ENCODE measurements at regions of chr12 and their contacts with region 1.

Region 1: GRCh38 chr12:92987362-92987761 is 58.3 kb upstream of the EEA1 start:
- DNase-seq: peak in 1 of 2 experiments; percentile 75
- H3K4me3 ChIP-seq: no peak overlapping the region
- H3K4me3 Mint-ChIP-seq: peak overlapping the region; percentile 27
- H3K27ac Mint-ChIP-seq: peak overlapping the region; percentile 87
- H3K4me1 ChIP-seq: peaks cover 30% of the 10 kb centered on the region
- H3K4me1 Mint-ChIP-seq: peaks cover 33% of the 10 kb centered on the region
- H3K27me3 ChIP-seq: no peaks in the 10 kb centered on the region
- H3K27me3 Mint-ChIP-seq: no peaks in the 10 kb centered on the region
- CTCF ChIP-seq: peak; percentile 50 to 79

Region 2: GRCh38 chr12:92259852-92260251 is 727.5 kb before region 1 on chr12:
- CTCF ChIA-PET with region 1: no interaction called
- POLR2A ChIA-PET with region 1: no interaction called
- intact Hi-C with region 1: no loop called
- DNase-seq: no peak
- H3K4me3 ChIP-seq: no peak overlapping the region
- H3K4me3 Mint-ChIP-seq: no peak overlapping the region
- H3K27ac Mint-ChIP-seq: no peak overlapping the region
- H3K4me1 ChIP-seq: no peaks in the 10 kb centered on the region
- H3K4me1 Mint-ChIP-seq: peaks cover 5% of the 10 kb centered on the region
- H3K27me3 ChIP-seq: no peaks in the 10 kb centered on the region
- H3K27me3 Mint-ChIP-seq: peaks cover 7% of the 10 kb centered on the region
- CTCF ChIP-seq: no peak

Region 3: DNA sequence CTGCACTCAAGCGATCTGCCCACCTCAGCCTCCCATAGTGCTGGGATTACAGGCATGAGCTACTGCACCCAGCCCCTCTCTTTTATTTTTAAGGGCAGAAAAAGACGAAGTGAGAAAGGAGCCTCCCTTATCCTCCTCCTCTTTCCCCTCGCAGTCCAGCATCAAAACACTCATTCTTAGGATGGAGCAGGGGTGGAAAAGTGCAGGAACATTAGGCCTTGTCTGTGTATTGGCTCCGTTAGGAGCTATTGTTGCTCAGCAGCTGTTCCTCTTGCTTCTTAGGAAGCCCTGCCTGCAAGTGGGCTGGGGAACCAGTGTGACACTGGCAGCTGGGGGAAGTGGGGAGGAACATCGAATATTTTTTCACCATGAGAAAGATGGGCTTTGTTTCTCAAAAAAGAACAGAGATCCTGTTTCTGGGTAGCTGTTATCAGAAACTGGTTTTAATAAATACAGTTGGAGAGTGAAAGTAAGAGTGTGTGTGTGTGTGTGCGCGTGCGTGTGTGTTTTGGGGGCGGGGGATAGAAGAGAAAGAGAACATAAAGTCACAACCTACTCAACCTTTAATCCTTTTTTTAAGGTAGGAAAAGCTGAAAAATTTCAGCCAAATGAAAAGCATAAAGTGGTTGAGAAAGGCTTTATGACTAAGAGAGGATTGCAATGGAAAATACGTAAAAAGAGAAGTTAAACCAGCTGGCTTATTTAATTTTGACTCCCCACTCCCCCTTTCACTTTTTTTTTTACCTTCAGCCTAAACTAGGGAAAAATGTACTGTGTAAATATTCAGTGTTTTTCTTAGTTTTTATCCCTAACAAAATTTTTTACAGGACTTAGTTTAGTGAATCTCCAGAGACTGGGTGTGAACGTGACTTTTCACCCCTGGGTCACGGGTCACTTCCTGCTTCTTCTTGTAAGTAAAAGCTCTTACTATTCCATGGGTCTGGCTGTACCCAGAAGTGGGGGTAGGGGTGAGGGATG is 481.8 kb before region 1 on chr12:
- CTCF ChIA-PET with region 1: no interaction called
- POLR2A ChIA-PET with region 1: no interaction called
- intact Hi-C with region 1: no loop called
- DNase-seq: no peak
- H3K4me3 ChIP-seq: no peak overlapping the region
- H3K4me3 Mint-ChIP-seq: no peak overlapping the region
- H3K27ac Mint-ChIP-seq: no peak overlapping the region
- H3K4me1 ChIP-seq: no peaks in the 10 kb centered on the region
- H3K4me1 Mint-ChIP-seq: peaks cover 8% of the 10 kb centered on the region
- H3K27me3 ChIP-seq: no peaks in the 10 kb centered on the region; the same call in 1 of the 2 replicates
- H3K27me3 Mint-ChIP-seq: no peaks in the 10 kb centered on the region
- CTCF ChIP-seq: no peak

Region 4: DNA sequence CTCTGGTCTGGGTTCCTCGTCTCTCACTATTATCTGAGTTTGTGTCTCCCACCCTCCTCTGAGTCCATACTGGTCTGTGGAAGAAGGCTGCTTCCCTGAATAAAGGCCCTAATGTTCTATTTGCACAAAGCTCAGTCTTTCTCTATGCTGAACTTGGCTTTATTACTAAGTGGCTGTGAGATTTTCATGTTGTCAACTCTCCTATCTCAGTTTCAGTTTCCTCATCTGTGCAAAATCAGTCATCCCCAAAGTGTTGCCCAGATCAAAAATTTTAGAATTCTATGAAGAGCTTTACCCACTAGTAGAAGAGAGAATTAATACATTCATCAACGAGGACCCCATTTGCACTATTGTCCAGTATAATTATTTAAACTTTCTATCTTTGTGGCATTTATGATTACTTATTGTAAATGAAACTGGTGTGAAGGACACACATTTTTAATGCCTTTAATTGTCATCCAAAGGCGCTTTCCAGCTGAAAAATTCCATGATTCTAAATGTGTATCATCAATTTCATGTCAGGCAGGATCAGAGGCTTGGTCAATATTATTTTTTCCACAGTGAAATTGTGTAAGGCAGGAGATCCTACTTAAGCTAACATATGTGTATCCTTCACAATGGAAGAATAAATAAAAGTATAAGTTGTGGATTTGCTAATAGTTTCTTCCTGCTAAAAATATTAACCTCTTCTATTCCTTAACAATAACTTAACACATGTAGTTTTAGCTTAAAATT is 20.8 kb after region 1 on chr12:
- CTCF ChIA-PET with region 1: interaction called, 6 read pairs
- POLR2A ChIA-PET with region 1: no interaction called
- intact Hi-C with region 1: loop called (anchors 1 kb)
- DNase-seq: no peak
- H3K4me3 ChIP-seq: peak overlapping the region; percentile 41
- H3K4me3 Mint-ChIP-seq: peak overlapping the region; percentile 90
- H3K27ac Mint-ChIP-seq: peak overlapping the region; percentile 94
- H3K4me1 ChIP-seq: peaks cover 72% of the 10 kb centered on the region
- H3K4me1 Mint-ChIP-seq: peaks cover 43% of the 10 kb centered on the region
- H3K27me3 ChIP-seq: no peaks in the 10 kb centered on the region
- H3K27me3 Mint-ChIP-seq: no peaks in the 10 kb centered on the region
- CTCF ChIP-seq: no peak

Region 5: DNA sequence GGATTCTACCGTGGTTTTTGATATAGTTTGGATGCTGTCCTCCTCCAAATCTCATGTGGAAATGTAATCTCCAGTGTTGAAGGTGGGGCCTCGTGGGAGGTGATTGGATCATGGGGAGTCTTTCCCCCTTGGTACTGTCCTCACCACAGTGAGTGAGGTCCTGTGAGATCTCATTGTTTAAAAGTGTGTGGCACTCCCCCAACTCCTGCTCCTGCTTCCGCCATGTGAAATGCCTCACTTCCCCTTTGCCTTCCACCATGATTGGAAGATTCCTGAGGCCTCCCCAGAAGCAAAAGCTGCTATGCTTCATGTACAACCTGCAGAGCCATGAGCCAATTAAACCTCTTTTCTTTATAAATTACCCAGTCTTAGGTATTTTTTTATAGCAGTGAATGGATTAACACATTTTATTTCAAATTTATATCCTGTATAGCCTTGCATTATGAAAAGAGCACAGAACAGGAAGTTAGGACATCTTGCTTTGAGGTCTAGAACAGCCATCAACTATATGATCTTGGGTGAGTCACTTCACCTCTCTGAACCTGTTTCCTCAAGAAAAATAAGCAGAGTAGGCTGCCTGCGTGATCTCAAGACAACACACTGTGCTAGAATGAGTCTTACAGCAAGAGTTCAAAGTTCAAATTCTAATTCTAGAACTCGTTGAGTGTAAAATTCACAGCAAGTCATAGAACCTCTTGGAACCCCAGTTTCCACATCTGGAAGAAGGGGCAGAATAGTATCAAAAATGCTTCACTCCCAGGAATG is 102.6 kb after region 1 on chr12:
- CTCF ChIA-PET with region 1: no interaction called
- POLR2A ChIA-PET with region 1: interaction called, 4 read pairs
- intact Hi-C with region 1: loop called (anchors 2 kb)
- DNase-seq: peak; percentile 37 to 67
- H3K4me3 ChIP-seq: no peak overlapping the region
- H3K4me3 Mint-ChIP-seq: no peak overlapping the region
- H3K27ac Mint-ChIP-seq: peak overlapping the region; percentile 98
- H3K4me1 ChIP-seq: peaks cover 67% of the 10 kb centered on the region
- H3K4me1 Mint-ChIP-seq: peaks cover 54% of the 10 kb centered on the region
- H3K27me3 ChIP-seq: no peaks in the 10 kb centered on the region
- H3K27me3 Mint-ChIP-seq: no peaks in the 10 kb centered on the region
- CTCF ChIP-seq: no peak

Region 6: GRCh38 chr12:93317227-93317626 is 329.9 kb after region 1 on chr12:
- CTCF ChIA-PET with region 1: interaction called, 3 read pairs
- POLR2A ChIA-PET with region 1: no interaction called
- intact Hi-C with region 1: loop called (anchors 2 kb)
- DNase-seq: peak; percentile 34 to 80
- H3K4me3 ChIP-seq: no peak overlapping the region
- H3K4me3 Mint-ChIP-seq: peak overlapping the region; percentile 17
- H3K27ac Mint-ChIP-seq: peak overlapping the region; percentile 95
- H3K4me1 ChIP-seq: peaks cover 42% of the 10 kb centered on the region
- H3K4me1 Mint-ChIP-seq: peaks cover 31% of the 10 kb centered on the region
- H3K27me3 ChIP-seq: no peaks in the 10 kb centered on the region
- H3K27me3 Mint-ChIP-seq: no peaks in the 10 kb centered on the region
- CTCF ChIP-seq: no peak

Region 7: DNA sequence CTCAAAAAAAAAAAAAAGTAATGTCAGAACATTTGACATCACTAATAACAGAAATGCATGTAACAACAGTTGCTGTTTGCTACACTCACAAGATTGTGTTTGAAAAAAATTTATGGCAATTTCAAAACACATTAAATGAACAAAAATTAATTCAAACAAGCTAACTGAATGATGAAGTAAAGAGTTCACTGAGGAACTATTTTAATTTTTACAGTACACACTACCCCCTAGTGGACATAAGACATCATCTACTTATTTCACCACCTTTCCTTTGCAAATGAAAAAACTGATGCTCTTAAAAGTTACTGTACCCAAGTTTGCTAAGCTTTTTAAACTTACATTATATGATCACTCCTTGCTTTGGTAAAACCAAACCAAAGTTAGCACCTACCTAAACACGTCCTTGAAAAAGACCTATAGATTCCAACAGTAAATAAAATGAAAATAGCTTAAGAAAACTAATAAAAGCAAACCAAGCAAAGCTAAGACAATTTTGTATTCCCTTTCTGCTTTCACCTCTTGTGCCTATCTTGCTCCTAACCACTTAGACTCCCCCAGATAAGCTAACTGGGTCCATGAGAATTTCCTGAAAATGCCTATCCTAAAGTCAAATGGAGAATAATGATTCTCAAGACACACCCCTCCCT is 432.1 kb after region 1 on chr12:
- CTCF ChIA-PET with region 1: interaction called, 8 read pairs
- POLR2A ChIA-PET with region 1: interaction called, 4 read pairs
- intact Hi-C with region 1: loop called (anchors 1 kb)
- DNase-seq: no peak
- H3K4me3 ChIP-seq: no peak overlapping the region
- H3K4me3 Mint-ChIP-seq: no peak overlapping the region
- H3K27ac Mint-ChIP-seq: no peak overlapping the region
- H3K4me1 ChIP-seq: peaks cover 4% of the 10 kb centered on the region; the same call in 1 of the 2 replicates
- H3K4me1 Mint-ChIP-seq: peaks cover 16% of the 10 kb centered on the region
- H3K27me3 ChIP-seq: no peaks in the 10 kb centered on the region
- H3K27me3 Mint-ChIP-seq: no peaks in the 10 kb centered on the region
- CTCF ChIP-seq: peak; percentile 50 to 68